ENCODE measurements at regions of chr5 and their contacts with region 1.

Region 1: GRCh38 chr5:43040287-43041098 is at the start of gene ANXA2R:
- DNase-seq: peak; percentile 87
- ATAC-seq: peak; percentile 58 to 64
- total RNA-seq, gene ANXA2R: 1.6 to 1.9 TPM

Region 2: GRCh38 chr5:42908509-42909488 is 131.7 kb before region 1 on chr5:
- intact Hi-C with region 1: loop called in 1 of 2 experiments (anchors 5 kb)
- DNase-seq: peak; percentile 95
- ATAC-seq: peak; percentile 94

Region 3: GRCh38 chr5:42994246-42995151 is 46.0 kb before region 1 on chr5:
- intact Hi-C with region 1: loop called (anchors 2 to 5 kb)
- DNase-seq: peak; percentile 90
- ATAC-seq: peak; percentile 75 to 78

Region 4: DNA sequence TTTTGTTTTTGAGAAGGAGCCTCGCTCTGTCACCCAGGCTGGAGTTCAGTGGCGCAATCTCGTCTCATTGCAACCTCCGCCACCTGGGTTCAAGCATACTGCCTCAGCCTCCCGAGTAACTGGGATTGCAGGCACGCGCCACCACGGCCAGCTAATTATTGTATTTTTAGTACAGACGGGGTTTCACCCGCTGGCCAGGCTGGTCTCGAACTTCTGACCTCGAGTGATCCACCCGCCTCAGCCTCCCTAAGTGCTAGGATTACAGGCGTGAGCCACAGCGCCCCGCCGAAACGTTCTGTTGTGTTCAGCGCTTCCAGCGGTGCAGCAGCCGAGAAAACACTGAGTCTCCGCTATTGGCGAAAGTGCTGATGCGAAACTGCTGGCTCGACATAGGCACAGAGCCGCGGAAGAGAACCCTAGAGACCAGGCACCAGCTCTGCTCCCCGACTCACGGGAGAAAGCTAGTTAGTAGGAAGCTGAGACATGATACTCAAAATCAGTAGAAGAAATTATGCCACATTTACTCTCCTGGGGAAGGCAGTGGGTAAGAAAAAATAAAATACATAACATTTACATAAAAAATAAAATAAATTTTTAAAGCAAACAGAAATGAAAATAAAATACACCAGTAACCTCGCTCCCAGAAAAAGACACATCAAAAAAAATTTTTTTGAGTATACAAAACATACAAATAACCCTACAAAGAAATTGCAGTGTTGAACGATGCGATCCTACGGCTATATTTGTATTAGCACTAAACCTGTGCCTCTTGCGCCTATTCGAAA is 31.9 kb before region 1 on chr5:
- intact Hi-C with region 1: loop called in 1 of 2 experiments (anchors 5 kb)
- DNase-seq: peak; percentile 90
- ATAC-seq: peak; percentile 80 to 88

Region 5: GRCh38 chr5:43019614-43020293 is 20.7 kb before region 1 on chr5:
- intact Hi-C with region 1: loop called in 1 of 2 experiments (anchors 1 kb)
- DNase-seq: peak; percentile 72
- ATAC-seq: peak; percentile 23 to 34

Region 6: DNA sequence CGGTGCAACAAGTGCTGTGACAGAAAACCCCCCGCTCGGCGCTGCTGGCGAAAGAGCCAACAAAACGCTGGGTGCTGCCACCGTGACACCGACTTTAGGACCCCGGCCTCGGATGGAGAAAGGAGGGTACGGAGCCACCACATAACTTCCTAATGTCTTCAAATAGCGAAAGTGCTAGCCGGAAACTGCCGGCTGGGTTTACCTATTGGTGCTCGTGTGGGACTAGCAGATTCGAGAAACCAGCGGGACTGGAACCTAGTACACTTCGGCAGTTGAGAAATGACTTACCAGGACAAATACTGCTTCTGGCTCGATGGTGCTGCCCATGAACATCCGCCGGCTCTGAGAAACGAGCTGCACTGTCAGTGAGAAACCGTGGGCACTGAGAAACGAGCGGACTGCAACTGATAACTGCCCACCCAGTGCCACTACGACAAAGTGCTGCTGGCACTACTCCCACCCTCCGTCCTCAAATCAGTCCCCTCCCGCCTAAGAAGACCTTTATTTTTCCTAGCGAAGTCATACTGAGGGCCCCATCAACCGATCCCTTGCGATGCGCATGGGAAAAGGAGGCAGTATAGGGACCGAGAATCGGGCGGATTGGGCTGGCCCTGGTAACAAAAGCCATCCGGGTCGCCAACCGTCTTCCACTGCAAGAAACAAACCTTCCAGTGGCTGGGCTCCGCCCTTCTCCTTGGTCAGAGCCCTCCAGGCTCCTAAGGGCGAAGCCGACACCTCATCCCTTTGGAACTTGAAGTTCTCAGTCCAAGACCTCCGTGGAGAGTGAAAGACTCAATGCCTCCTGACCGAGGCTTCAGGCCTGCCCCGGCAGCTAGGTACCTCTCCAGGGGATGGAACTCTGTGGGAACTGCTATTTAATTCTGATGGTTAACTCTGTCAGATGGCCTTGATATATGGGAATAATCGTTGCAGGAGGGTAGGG is 26.6 kb after region 1 on chr5:
- intact Hi-C with region 1: loop called in 1 of 2 experiments (anchors 1 kb)
- DNase-seq: peak; percentile 89
- ATAC-seq: peak; percentile 70 to 71

Measured in left cardiac atrium (tissue), 4 donors.